Posterior cingulate gyrus (tissue), 11 donors: ENCODE measurements at regions of chr16 and their contacts with region 1.

Region 1: DNA sequence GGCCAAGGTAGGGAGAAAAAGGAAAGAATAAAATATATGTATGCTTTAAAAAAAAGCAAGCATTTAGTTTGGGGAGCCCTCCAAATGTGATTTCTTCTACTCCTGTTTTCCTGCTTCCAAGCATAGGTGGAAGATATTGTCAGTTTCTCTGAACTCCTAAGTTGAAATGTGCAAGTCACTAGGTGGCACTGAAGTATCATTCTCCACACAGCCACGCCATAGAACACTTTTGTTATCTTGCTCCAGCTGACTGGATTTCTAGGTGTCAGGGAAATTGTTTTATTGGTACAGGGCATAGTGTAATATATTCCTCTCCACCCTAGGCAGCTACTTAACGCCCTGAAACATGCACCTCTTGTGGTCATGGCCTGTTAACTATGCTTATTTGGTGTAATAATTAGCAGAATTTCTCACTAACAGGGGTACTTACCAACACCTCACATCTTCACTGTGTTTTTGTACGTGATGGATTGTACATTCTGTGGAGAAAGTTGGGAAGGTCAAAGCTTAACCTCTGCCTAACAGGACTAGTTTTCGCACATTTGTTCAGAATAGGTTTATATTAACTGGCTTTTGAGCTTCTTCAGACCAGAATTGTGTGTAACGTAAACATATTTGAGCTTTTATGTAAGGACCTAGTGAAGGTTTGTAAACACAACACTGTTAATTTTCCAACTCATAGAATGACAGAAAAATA is 69.3 kb downstream of the FTO start:
- DNase-seq: peak in 3 of 10 donors; percentile 5 to 43 (median 22)

Region 2: DNA sequence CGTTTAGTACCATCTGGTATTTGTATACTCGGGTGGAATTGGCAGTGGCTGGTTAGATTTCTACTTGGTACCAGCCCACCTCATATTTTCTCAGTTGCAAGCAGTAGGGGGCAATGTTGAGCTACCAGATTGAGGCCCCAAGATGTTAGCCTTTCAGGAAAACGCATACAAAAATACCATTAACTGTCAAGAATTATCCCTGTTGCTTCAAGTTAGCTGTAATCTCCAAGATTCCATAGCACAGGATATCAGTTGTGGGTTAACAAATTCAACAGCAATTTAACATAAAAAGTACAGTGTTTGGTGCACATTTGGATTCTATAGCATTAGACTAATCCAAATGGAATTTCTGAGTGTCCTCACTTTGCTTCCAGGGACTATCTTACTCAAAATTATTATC is 118.9 kb after region 1 on chr16:
- intact Hi-C with region 1: loop called (anchors 10 kb)
- DNase-seq: peak in 6 of 10 donors; percentile 23 to 83 (median 60)

Region 3: GRCh38 chr16:54286090-54286993 is 513.0 kb after region 1 on chr16 and contains the start of gene IRX3:
- intact Hi-C with region 1: loop called (anchors 10 kb)
- DNase-seq: peak in 1 of 10 donors; percentile 49

Region 4: GRCh38 chr16:54929090-54930004 is 1156.0 kb after region 1 on chr16:
- intact Hi-C with region 1: loop called (anchors 10 kb)
- DNase-seq: peak; percentile 88 to 99 (median 96)